Heart left ventricle (tissue), 16 donors: ENCODE measurements at regions of chr11 and their contacts with region 1.

Region 1: DNA sequence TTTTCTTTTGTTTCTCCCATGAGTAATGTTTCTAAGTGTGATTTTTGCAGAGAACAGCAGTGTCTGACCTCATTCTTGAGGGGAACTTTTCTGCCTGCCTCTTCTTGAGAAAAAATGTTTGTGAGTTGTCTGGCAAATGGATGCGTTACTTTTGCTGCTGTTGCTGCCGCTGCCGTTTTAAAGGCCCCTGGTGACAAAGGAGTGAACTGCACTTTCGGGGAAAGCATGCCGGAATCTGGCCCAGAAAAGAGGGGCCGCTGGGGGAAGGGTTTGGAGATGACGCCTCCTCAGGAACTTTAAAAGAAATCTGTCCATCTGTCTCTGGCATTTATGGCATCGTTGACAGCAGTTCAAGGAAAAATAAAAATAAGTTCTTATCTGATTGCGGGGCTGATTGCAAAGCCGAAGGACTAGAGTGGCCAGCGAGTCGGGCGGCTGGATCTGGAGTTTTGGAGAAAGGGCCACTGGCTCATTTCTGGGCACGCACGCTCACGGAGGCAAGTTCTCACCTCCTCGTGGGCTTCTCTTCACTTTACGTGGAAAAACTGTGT is 16.5 kb downstream of the ZBTB16 start:
- DNase-seq: peak in 4 of 5 donors; percentile 46 to 56 (median 52)
- ATAC-seq: peak in 2 of 4 donors; percentile 1 to 2
- H3K4me3 ChIP-seq: peak overlapping the region in 8 of 12 donors; percentile 8 to 29 (median 18)
- H3K27ac ChIP-seq: peak overlapping the region in 10 of 12 donors; percentile 1 to 92 (median 81)
- H3K4me1 ChIP-seq: peaks cover 34 to 100% (median 97%) of the 10 kb centered on the region in 12 donors
- H3K27me3 ChIP-seq: no peaks in the 10 kb centered on the region
- CTCF ChIP-seq: peak; percentile 46 to 74 (median 59)
- POLR2A ChIP-seq: peak in 1 of 2 donors; percentile 8

Region 2: GRCh38 chr11:113991170-113991569 is 84.8 kb before region 1 on chr11:
- intact Hi-C with region 1: no loop called
- DNase-seq: peak in 2 of 5 donors; percentile 29 to 46
- ATAC-seq: peak in 3 of 4 donors; percentile 33 to 48 (median 41)
- H3K4me3 ChIP-seq: no peak overlapping the region
- H3K27ac ChIP-seq: no peak overlapping the region
- H3K4me1 ChIP-seq: no peaks in the 10 kb centered on the region
- H3K27me3 ChIP-seq: peaks cover 0 to 45% (median 7%) of the 10 kb centered on the region in 9 donors
- CTCF ChIP-seq: no peak
- POLR2A ChIP-seq: no peak

Region 3: GRCh38 chr11:114099392-114100178 is 23.6 kb after region 1 on chr11:
- intact Hi-C with region 1: no loop called
- DNase-seq: no peak
- ATAC-seq: peak in 3 of 4 donors; percentile 24 to 35 (median 35)
- H3K4me3 ChIP-seq: no peak overlapping the region
- H3K27ac ChIP-seq: peak overlapping the region in 2 of 12 donors; percentile 18 to 26
- H3K4me1 ChIP-seq: peaks cover 10 to 100% (median 64%) of the 10 kb centered on the region in 12 donors
- H3K27me3 ChIP-seq: no peaks in the 10 kb centered on the region
- CTCF ChIP-seq: no peak
- POLR2A ChIP-seq: no peak

Region 4: DNA sequence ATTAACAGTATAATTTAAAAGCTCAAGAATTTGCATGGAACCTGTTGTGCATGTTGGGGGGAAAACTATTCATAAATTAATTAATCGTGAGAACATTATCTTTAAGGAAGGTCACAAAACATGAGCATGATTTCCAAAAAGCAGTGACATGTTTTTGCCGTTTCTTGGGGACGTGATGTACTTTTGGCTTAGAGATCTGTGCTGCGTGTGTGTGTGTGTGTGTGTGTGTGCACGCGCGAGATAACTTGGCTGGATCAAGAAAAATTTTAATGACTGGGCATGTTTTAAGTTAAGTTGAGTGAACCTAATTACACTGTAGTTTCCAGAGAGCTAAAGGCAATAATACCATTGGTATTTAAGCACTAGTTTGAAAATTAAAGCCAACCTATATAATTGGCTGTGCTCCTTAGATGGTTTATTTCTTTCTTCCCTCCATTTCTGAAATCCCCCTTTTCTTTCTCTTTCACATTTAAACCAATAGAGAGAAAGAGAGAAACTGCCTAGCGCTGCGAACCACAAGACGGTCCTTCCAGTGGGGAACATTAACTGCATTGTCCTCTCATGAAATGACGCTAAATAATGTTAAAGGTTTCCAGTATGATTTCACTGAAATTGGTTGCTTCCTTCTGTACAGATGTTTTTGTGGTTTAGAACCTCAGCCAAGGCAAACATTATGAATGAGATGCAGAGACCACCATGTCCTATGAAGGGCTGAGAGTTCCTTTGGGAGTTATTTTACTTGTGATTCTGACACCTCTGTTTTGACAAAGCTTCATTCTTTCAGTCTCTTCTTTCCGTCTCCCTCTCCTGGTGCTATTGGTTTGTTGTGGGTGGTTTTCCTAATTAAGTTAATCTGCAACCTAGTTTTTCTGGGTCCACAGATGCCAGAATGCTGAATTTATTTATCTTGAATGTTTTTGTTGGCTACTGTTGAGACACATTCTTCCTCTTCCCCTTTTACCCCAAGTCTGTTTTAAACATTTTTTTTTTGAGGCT is 35.3 kb after region 1 on chr11:
- intact Hi-C with region 1: loop called in 1 of 10 experiments (anchors 5 kb)
- DNase-seq: peak in 2 of 5 donors; percentile 59 to 73
- ATAC-seq: peak; percentile 30 to 72 (median 38)
- H3K4me3 ChIP-seq: peak overlapping the region in 9 of 12 donors; percentile 7 to 47 (median 36)
- H3K27ac ChIP-seq: peak overlapping the region; percentile 59 to 87 (median 74)
- H3K4me1 ChIP-seq: peaks cover 16 to 99% (median 71%) of the 10 kb centered on the region in 12 donors
- H3K27me3 ChIP-seq: no peaks in the 10 kb centered on the region
- CTCF ChIP-seq: peak in 1 of 12 donors; percentile 23
- POLR2A ChIP-seq: no peak

Region 5: GRCh38 chr11:114121804-114122504 is 46.0 kb after region 1 on chr11:
- intact Hi-C with region 1: loop called in 2 of 10 experiments (anchors 5 kb)
- DNase-seq: no peak
- ATAC-seq: no peak
- H3K4me3 ChIP-seq: no peak overlapping the region
- H3K27ac ChIP-seq: peak overlapping the region in 8 of 12 donors; percentile 15 to 72 (median 30)
- H3K4me1 ChIP-seq: peaks cover 18 to 99% (median 74%) of the 10 kb centered on the region in 12 donors
- H3K27me3 ChIP-seq: no peaks in the 10 kb centered on the region
- CTCF ChIP-seq: no peak
- POLR2A ChIP-seq: no peak

Region 6: DNA sequence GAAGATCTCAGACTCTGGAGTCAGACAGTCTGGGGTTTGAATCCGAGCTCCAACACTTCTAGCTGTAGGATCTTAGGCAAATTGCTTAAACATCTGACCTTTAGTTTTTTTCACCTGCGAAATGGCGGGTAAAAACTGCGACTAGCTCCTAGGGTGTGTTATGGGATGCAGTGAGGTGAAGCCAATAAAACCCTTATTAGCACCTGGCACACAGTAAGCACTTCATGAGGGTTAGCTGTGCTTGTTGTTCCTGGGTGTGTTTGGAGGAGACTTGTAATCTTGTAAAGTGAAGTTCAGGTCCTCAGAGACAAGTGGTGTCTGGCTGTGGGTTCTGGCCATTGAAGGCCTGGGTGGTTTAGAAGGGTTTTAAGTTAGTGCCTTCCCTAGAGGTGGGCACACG is 52.4 kb after region 1 on chr11:
- intact Hi-C with region 1: loop called in 3 of 10 experiments (anchors 5 to 10 kb)
- DNase-seq: no peak
- ATAC-seq: no peak
- H3K4me3 ChIP-seq: peak overlapping the region in 1 of 12 donors; percentile 2
- H3K27ac ChIP-seq: peak overlapping the region in 8 of 12 donors; percentile 27 to 86 (median 58)
- H3K4me1 ChIP-seq: peaks cover 50 to 100% (median 95%) of the 10 kb centered on the region in 12 donors
- H3K27me3 ChIP-seq: no peaks in the 10 kb centered on the region
- CTCF ChIP-seq: no peak
- POLR2A ChIP-seq: no peak

Region 7: DNA sequence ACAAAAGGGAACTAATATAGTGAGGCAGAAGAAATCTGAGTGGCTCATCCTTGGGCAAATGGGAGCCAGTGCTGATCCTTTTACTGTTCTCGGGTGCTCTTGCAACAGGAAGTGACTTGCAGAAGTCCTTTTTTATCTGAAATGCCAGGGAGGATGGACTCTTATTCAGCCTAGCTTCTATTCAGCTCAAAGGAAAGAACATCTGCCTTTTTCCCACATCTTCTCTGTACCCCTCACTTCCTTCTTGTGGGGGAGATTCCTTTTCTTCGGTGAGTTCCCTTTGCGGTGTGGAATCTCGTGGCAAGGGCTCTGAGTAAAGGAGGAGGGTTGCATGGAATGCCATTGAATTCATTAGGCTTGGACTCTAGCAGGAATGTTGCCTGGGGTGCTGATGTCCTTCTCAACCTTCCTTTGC is 59.8 kb after region 1 on chr11:
- intact Hi-C with region 1: loop called in 1 of 10 experiments (anchors 10 kb)
- DNase-seq: no peak
- ATAC-seq: peak in 3 of 4 donors; percentile 2 to 19 (median 7)
- H3K4me3 ChIP-seq: peak overlapping the region in 1 of 12 donors; percentile 9
- H3K27ac ChIP-seq: peak overlapping the region in 11 of 12 donors; percentile 40 to 86 (median 69)
- H3K4me1 ChIP-seq: peaks cover 64 to 100% (median 96%) of the 10 kb centered on the region in 12 donors
- H3K27me3 ChIP-seq: no peaks in the 10 kb centered on the region
- CTCF ChIP-seq: no peak
- POLR2A ChIP-seq: no peak

Region 8: DNA sequence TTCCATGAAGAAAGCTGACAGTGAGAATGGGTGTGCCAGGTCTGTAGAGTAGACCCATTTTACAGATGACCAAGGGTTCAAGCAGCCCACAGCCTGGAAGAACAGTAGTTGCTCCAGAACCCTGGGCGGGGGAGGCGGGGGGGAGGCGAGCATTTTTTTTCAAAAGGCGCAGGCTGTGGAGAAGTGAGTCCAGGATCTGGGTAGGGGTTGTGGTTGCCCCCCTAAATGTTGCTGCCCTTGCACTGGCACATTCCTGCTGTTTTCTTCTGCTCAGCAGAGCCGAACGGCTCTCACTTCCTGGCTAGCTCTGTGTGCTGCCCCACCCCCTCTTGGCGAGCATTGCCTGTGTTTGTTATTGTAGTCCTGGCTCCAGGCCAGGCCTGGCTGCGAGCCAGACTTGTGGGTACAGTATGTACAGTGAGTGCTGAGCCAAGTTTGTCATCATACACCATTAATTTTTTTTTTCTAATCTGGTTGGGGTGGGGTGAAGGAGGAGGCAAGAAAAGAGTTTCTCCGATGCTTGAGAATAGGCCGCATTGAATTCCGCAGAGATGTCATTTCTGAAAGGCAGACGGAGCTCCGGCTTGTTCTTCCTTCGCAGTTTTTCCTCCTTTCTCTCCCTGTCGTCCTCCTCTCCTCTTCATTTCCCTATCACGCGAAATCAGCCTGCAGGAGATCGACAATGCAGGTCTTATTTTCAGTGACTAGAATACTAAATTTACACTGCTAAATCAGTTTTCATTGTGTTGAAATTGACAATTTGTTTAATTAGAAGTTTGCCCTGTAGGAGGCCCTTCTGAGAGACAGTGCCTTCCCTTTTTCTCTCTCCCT is 84.1 kb after region 1 on chr11:
- intact Hi-C with region 1: loop called in 3 of 10 experiments (anchors 5 kb)
- DNase-seq: peak; percentile 98 to 100 (median 99)
- ATAC-seq: peak; percentile 65 to 80 (median 72)
- H3K4me3 ChIP-seq: peak overlapping the region in 11 of 12 donors; percentile 18 to 46 (median 33)
- H3K27ac ChIP-seq: peak overlapping the region; percentile 87 to 100 (median 98)
- H3K4me1 ChIP-seq: peaks cover 54 to 99% (median 90%) of the 10 kb centered on the region in 12 donors
- H3K27me3 ChIP-seq: no peaks in the 10 kb centered on the region
- CTCF ChIP-seq: peak in 1 of 12 donors; percentile 9
- POLR2A ChIP-seq: peak; percentile 33 to 79

Region 9: GRCh38 chr11:114166897-114167323 is 90.9 kb after region 1 on chr11:
- intact Hi-C with region 1: loop called in 4 of 10 experiments (anchors 5 kb)
- DNase-seq: no peak
- ATAC-seq: peak in 3 of 4 donors; percentile 1 to 3 (median 3)
- H3K4me3 ChIP-seq: peak overlapping the region in 3 of 12 donors; percentile 5 to 31 (median 8)
- H3K27ac ChIP-seq: peak overlapping the region; percentile 80 to 100 (median 98)
- H3K4me1 ChIP-seq: peaks cover 68 to 100% (median 94%) of the 10 kb centered on the region in 12 donors
- H3K27me3 ChIP-seq: no peaks in the 10 kb centered on the region
- CTCF ChIP-seq: no peak
- POLR2A ChIP-seq: peak in 1 of 2 donors; percentile 46